HCT116 (cell line): ENCODE measurements at regions of chr12 and their contacts with region 1.

Region 1: GRCh38 chr12:51424662-51425438 is at the start of gene SLC4A8:
- DNase-seq: peak; percentile 57
- ATAC-seq: peak; percentile 94
- H3K4me3 ChIP-seq: peak within 1 kb of the TSS; percentile 37 to 51
- H3K27ac ChIP-seq: no peak within 1 kb of the TSS
- H3K4me1 ChIP-seq: peaks cover 7 to 9% of the 10 kb centered on the region in 2 experiments; a peak in 2 of 4 replicates
- H3K27me3 ChIP-seq: no peaks in the 10 kb centered on the region
- CTCF ChIP-seq: peak; percentile 71 to 84 (median 83)
- POLR2A ChIP-seq: no peak
- RAD21 ChIP-seq: peak; percentile 71
- total RNA-seq, gene SLC4A8: 1.4 TPM

Region 2: GRCh38 chr12:51636581-51636980 is 211.7 kb after region 1 on chr12:
- CTCF ChIA-PET with region 1: no interaction called
- POLR2A ChIA-PET with region 1: no interaction called
- RAD21 ChIA-PET with region 1: no interaction called
- intact Hi-C with region 1: no loop called
- DNase-seq: no peak
- ATAC-seq: no peak
- H3K4me3 ChIP-seq: no peak overlapping the region
- H3K27ac ChIP-seq: no peak overlapping the region
- H3K4me1 ChIP-seq: peaks cover 8% of the 10 kb centered on the region in 2 experiments
- H3K27me3 ChIP-seq: no peaks in the 10 kb centered on the region
- CTCF ChIP-seq: no peak
- POLR2A ChIP-seq: no peak
- RAD21 ChIP-seq: no peak

Region 3: GRCh38 chr12:51678086-51678724 is 253.4 kb after region 1 on chr12:
- CTCF ChIA-PET with region 1: interaction called, 5 read pairs
- POLR2A ChIA-PET with region 1: no interaction called
- RAD21 ChIA-PET with region 1: no interaction called
- intact Hi-C with region 1: loop called (anchors 1 kb)
- DNase-seq: peak; percentile 34
- ATAC-seq: peak; percentile 99
- H3K4me3 ChIP-seq: no peak overlapping the region
- H3K27ac ChIP-seq: no peak overlapping the region
- H3K4me1 ChIP-seq: peaks cover 0 to 3% of the 10 kb centered on the region in 2 experiments; a peak in 1 of 4 replicates
- H3K27me3 ChIP-seq: no peaks in the 10 kb centered on the region
- CTCF ChIP-seq: peak; percentile 63 to 90 (median 87); a peak in 5 of 6 replicates
- POLR2A ChIP-seq: no peak
- RAD21 ChIP-seq: peak; percentile 73

Region 4: DNA sequence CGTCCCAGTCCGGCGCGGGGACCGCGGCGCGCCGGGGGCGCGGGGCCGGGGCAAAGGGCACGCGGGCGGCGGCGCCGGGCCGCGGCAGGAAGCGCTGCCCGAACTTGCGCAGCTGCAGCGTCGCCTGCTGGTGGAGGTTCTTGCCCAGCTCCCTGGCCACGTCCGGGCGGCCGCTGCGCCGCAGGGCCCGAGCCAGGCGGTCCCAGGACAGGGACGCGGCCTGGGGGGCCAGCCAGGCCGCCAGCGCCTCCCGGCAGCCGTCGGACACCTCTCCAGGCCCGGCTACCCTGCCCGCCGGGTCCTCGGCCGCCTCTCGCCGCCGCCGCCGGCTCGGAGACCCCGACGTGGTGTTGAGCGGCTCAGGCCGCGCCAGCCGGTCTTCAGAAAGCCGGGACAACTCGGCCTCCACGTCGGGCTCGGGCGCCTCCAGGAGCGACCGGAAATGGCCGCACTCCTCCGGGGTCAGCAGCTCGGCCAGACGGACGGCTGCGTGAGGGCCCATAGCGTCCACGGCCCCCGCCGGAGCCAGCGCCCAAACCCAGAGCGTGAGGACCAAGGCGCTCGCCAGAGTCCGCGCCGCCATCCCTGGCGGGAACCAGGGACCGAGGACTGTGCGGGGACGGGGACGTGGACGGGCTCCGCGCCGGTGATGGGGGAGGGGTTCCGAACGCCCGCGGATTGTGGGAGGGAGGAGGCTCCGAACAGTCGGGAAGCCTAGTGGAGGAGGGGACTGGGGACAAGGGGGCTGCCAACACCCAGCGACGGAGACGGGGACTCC is 389.6 kb after region 1 on chr12:
- CTCF ChIA-PET with region 1: interaction called, 8 read pairs
- POLR2A ChIA-PET with region 1: no interaction called
- RAD21 ChIA-PET with region 1: no interaction called
- intact Hi-C with region 1: loop called (anchors 2 kb)
- DNase-seq: no peak
- ATAC-seq: peak; percentile 86
- H3K4me3 ChIP-seq: peak overlapping the region; percentile 41 to 56
- H3K27ac ChIP-seq: peak overlapping the region; percentile 48; the same call in 1 of the 2 replicates
- H3K4me1 ChIP-seq: peaks cover 0 to 11% of the 10 kb centered on the region in 2 experiments; a peak in 1 of 4 replicates
- H3K27me3 ChIP-seq: no peaks in the 10 kb centered on the region
- CTCF ChIP-seq: peak; percentile 13 to 50 (median 24); a peak in 3 of 6 replicates
- POLR2A ChIP-seq: no peak
- RAD21 ChIP-seq: peak; percentile 43; the same call in 1 of the 2 replicates

Region 5: DNA sequence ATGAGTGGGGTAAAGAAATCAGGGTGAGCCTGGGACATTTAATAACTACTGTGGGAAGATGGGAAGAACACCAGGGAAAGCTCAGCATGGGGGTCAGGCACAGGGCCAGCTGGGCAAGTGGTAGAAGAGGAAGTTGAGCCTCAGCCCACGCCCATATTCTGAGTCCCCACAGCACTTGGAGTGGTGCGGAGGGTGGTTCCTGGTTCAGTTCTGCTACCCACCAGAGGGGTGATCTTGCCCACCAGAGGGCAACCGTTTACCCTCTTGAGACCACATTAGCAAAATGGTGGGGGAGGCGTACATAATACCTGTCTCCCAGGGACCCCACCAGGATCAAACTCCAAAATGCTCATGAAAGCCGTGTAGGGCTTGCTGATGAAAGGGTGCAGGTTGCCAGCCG is 446.3 kb after region 1 on chr12:
- CTCF ChIA-PET with region 1: interaction called, 55 read pairs
- POLR2A ChIA-PET with region 1: no interaction called
- RAD21 ChIA-PET with region 1: interaction called in 1 of 2 experiments, 3 read pairs
- intact Hi-C with region 1: loop called (anchors 1 kb)
- DNase-seq: no peak
- ATAC-seq: no peak
- H3K4me3 ChIP-seq: no peak overlapping the region
- H3K27ac ChIP-seq: no peak overlapping the region
- H3K4me1 ChIP-seq: peaks cover 0 to 6% of the 10 kb centered on the region in 2 experiments; a peak in 1 of 4 replicates
- H3K27me3 ChIP-seq: no peaks in the 10 kb centered on the region
- CTCF ChIP-seq: no peak
- POLR2A ChIP-seq: no peak
- RAD21 ChIP-seq: no peak

Region 6: DNA sequence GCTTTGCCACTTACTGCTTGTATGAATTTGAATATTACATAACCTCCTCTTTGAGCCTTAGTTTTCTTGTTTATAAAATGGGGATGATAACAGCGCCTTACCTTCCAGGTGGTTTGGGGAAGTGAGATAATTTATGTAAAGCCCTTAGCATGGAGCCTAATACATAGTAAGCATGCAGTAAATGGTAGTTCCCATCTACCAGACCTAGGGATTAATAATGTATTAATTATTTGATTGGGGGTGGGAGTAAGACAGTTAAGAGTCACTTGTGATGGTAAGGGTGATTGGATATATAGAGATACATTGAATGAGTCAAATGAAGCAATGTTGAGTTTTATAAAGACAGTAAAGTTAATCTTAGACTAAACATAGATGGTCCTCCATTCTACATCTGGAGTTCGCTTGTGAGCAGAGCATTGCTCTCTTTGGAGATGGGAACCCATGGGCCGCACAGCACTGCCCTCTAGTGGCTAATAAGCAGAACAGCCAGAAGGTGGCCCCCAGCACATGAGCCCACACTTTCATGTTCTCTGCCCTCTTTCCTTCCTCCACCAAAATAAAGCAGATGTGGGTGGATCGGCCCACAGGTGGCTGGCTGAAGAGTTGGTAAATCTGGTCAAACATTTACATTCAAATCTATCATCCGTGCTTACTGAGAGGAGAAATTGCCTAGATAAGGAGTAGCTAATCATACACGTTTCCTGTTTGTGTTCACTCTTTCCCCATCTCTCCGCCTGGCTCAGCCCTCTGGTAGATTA is 555.4 kb after region 1 on chr12:
- CTCF ChIA-PET with region 1: no interaction called
- POLR2A ChIA-PET with region 1: no interaction called
- RAD21 ChIA-PET with region 1: no interaction called
- intact Hi-C with region 1: loop called (anchors 2 kb)
- DNase-seq: no peak
- ATAC-seq: peak; percentile 97
- H3K4me3 ChIP-seq: no peak overlapping the region
- H3K27ac ChIP-seq: no peak overlapping the region
- H3K4me1 ChIP-seq: no peaks in the 10 kb centered on the region
- H3K27me3 ChIP-seq: no peaks in the 10 kb centered on the region
- CTCF ChIP-seq: peak; percentile 82 to 98 (median 95)
- POLR2A ChIP-seq: no peak
- RAD21 ChIP-seq: peak; percentile 82